Upper lobe of right lung (tissue), 1 donor: ENCODE measurements at regions of chr12 and their contacts with region 1.

Region 1: GRCh38 chr12:46364777-46365580 is 7.6 kb downstream of the SLC38A2 start:
- DNase-seq: no peak
- ATAC-seq: no peak
- H3K4me3 ChIP-seq: peak overlapping the region; percentile 92
- H3K27ac ChIP-seq: no peak overlapping the region
- H3K4me1 ChIP-seq: peaks cover 76% of the 10 kb centered on the region
- H3K27me3 ChIP-seq: no peaks in the 10 kb centered on the region
- CTCF ChIP-seq: no peak

Region 2: DNA sequence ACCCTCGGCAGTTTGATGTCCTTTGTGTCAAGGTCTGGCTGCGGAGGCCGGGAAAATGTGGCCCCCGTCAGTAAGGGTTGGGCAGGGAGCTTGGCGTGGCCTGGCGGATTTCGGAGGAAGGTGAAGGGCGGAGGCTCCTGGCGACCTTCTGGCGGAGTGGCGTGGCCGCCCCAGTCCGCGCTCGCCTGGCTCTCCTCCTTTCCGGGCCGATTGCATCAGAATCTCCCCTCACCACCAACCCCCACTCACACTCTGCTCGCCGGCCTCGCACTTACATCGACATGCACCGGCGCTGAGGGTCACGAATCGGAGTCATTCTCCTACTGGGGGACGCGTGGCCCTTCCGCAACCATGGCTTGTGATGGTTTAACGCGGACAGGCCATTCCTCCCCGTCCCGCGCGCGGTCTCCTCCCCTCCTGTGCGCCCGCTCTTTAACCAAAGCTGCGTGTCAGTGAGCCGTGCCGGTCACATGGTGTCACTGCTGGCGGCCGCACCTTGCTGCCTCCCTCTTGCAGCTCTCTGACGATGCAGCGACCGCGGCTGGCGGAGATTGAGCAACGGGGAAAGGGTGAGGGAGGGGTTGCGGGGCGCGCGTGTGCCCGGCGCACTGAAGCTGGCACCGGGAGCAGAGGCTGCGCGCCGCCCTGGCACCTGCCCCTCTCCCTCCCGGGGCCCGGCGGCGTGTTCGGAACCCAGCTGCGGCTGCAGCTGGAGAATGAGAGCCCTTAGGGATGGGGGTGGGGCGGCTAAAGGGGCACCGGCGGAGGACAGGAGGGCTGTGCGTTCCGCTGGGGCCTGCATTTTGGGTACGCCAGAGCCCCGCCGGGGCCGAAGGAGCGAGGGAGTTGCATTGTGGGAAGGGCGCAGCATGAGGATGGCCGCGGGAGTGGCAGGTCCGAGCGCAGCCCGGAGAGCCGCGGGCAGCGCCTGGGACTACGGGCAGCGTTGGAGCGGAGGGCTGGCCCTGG is 96.1 kb before region 1 on chr12 and contains the start of gene SLC38A1:
- intact Hi-C with region 1: no loop called
- DNase-seq: peak; percentile 95
- ATAC-seq: peak; percentile 91
- H3K4me3 ChIP-seq: peak within 1 kb of the TSS; percentile 67
- H3K27ac ChIP-seq: peak within 1 kb of the TSS; percentile 89
- H3K4me1 ChIP-seq: peaks cover 16% of the 10 kb centered on the region
- H3K27me3 ChIP-seq: peaks cover 17% of the 10 kb centered on the region
- CTCF ChIP-seq: no peak
- total RNA-seq, gene SLC38A1: 58.5 TPM

Region 3: DNA sequence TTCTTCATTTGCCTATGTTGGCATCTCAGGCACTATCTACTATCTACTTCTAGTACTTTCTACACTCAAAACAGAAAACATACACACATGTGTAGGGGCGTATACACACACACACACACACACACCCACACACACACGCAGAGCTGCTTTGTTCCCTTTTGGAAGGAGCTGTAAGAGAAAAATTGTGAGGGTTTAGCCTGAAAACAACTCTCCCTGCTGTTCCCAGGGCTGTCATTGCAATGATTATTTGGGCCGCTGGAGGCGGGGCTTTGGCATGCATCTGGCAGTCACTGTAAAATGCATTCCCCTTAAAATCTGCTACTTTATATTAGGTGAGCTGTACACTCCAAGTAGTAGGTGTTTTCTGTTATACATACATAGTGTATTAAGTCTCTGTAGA is 36.7 kb after region 1 on chr12:
- intact Hi-C with region 1: no loop called
- DNase-seq: no peak
- ATAC-seq: no peak
- H3K4me3 ChIP-seq: no peak overlapping the region
- H3K27ac ChIP-seq: no peak overlapping the region
- H3K4me1 ChIP-seq: peaks cover 7% of the 10 kb centered on the region
- H3K27me3 ChIP-seq: no peaks in the 10 kb centered on the region
- CTCF ChIP-seq: peak; percentile 28

Region 4: GRCh38 chr12:46661110-46661845 is 296.3 kb after region 1 on chr12:
- intact Hi-C with region 1: loop called (anchors 10 kb)
- DNase-seq: no peak
- ATAC-seq: peak; percentile 95
- H3K4me3 ChIP-seq: no peak overlapping the region
- H3K27ac ChIP-seq: peak overlapping the region; percentile 24
- H3K4me1 ChIP-seq: peaks cover 16% of the 10 kb centered on the region
- H3K27me3 ChIP-seq: no peaks in the 10 kb centered on the region
- CTCF ChIP-seq: peak; percentile 86